ENCODE measurements at regions of chr21 and their contacts with region 1.

Region 1: DNA sequence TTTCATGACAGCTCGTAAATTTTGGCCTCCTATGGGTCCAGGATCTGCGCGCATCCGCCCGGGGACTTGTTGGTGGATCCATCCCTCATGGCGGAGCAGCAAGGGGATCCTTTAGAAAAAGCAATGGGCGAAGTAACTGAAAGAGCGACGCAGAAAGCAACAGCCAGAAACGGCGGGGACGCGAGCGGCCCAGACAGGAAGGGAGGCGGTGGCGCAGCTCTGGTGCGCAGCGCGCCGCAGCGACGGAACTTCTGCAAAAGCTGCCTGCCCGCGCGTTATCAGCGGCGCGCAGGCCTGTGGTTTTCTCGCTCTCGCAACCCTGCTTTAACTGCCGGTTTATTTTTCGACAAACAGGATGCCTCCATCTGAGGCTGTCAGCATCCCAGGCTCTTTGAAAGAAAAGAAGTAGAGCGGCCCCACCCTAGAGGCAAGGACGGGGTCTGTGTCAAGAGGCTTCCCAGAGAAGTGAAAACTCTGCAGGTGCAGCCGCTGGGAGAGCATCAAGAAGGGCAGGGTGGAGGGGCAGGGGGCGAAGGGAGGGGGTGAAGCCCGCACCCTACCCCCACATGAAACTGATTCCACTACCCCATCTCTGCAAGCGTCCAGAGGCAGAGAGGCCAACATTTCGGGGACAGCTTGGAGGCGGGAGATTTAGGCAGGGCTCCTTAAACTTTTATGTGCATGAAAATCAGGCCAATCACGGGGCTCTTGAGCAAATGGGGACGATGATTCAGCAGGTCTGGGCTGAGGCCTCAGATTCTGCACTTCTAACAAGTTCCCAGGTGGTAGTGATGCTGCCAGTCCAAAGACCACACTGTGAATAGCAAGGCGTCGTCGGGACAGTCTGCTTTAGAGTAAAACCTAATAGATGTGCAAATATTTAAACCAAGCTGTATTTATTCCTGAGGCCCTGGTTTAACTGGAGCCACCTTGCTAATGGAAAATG is 22.2 kb downstream of the RUNX1 start:
- DNase-seq: peak; percentile 79 to 89 (median 86)
- H3K4me3 ChIP-seq: peak overlapping the region; percentile 34 to 68 (median 45)
- H3K4me3 Mint-ChIP-seq: peak overlapping the region; percentile 82 to 97
- H3K27ac ChIP-seq: peak overlapping the region; percentile 81 to 93
- H3K27ac Mint-ChIP-seq: peak overlapping the region; percentile 97 to 99 (median 98)
- H3K4me1 ChIP-seq: peaks cover 47 to 53% of the 10 kb centered on the region in 2 donors
- H3K4me1 Mint-ChIP-seq: peaks cover 62% of the 10 kb centered on the region
- H3K27me3 ChIP-seq: no peaks in the 10 kb centered on the region
- H3K27me3 Mint-ChIP-seq: peaks cover 0 to 2% (median 0%) of the 10 kb centered on the region in 3 donors
- CTCF ChIP-seq: no peak

Region 2: DNA sequence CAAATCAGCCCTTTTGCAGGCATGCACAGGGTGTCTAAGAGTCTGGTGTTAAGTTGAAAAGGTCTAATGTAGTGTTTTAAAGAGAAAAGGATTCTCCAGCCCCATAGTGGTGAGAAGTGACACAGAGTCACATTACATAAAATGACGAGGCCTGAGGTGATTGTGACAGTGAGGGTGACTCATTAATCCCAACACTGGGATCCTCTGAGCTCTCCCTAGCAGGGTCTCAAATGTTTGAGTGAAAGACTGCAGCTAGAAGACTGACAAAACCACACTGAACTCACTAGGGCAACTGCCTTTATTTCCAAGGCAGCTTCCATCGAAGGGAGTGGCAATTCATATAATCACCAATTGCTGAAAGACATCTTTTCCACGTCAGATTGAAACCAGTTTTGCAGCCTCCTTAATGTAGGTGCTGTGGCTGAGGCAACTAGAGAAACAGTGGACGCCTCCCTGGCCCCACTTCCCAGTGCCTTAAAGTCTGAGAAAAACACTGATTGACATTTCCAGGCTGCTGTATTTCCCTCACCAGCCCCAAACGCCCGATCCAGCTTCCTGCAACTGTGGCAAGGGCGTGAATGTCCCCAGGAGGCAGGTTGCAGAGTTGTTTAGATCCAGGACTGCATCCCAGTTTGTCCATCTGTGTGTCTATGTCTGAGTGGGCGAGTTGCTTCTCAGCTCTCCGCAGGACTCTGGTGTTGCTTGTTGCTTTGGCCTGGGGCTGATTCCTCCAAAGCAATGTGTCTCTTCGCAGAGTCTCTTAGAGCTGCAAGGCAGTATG is 59.2 kb before region 1 on chr21:
- intact Hi-C with region 1: loop called in 1 of 2 experiments (anchors 5 kb)
- DNase-seq: peak; percentile 71 to 89 (median 87)
- H3K4me3 ChIP-seq: peak overlapping the region in 1 of 3 experiments; percentile 16
- H3K4me3 Mint-ChIP-seq: peak overlapping the region in 1 of 2 donors; percentile 21
- H3K27ac ChIP-seq: peak overlapping the region; percentile 42 to 70
- H3K27ac Mint-ChIP-seq: peak overlapping the region; percentile 81 to 97 (median 93)
- H3K4me1 ChIP-seq: peaks cover 66 to 67% of the 10 kb centered on the region in 2 donors
- H3K4me1 Mint-ChIP-seq: peaks cover 85% of the 10 kb centered on the region
- H3K27me3 ChIP-seq: no peaks in the 10 kb centered on the region
- H3K27me3 Mint-ChIP-seq: no peaks in the 10 kb centered on the region
- CTCF ChIP-seq: no peak

Region 3: DNA sequence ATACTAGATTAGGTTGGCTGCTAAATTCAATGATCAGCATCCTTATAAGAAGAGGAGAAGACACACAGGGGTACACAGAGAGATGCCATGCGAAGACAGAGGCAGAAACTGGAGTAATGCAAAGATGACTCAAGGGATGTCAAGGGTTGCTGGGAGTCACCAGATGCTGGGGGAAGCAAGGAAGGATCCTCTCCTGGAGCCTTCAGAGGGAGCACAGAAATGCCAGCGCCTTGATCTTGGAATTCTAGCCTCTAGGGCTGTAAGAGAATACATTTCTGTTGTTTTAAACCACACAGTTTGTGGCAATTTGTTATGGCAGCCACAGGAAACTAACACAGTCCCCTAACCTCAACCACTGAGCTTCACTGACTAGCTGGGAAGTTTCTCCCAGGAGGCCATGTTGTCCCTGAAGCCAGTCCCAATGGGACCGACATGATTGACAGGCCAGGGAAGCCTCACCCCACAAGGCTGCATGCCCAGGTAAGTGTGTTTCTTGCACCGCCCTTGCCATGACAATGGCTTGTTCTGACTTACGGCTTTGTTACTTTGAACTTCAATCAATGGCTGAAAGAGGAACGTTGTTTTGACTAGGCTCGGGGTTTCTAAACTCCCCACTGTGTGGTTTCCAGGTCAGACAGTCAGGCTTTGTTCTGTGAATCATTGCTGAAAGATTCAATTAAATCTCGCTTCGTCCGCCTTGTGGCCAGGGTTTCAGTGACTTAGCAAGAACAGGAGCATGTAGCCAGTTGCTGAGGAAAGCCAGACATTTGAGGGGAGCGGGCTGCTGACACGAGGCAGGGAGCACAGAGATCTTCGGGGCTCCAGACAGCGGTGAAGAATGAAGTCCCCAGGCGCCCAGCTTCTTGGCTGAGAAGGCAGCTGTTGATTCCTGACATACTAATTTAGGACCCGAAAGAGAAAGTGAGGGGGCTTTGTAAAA is 40.1 kb before region 1 on chr21:
- intact Hi-C with region 1: loop called in 1 of 2 experiments (anchors 5 kb)
- DNase-seq: peak in 2 of 3 donors; percentile 41 to 51
- H3K4me3 ChIP-seq: no peak overlapping the region
- H3K4me3 Mint-ChIP-seq: no peak overlapping the region
- H3K27ac ChIP-seq: peak overlapping the region in 1 of 2 donors; percentile 2
- H3K27ac Mint-ChIP-seq: peak overlapping the region in 6 of 7 donors; percentile 10 to 76 (median 34)
- H3K4me1 ChIP-seq: peaks cover 27 to 41% of the 10 kb centered on the region in 2 donors
- H3K4me1 Mint-ChIP-seq: peaks cover 77% of the 10 kb centered on the region
- H3K27me3 ChIP-seq: no peaks in the 10 kb centered on the region
- H3K27me3 Mint-ChIP-seq: peaks cover 0 to 3% (median 0%) of the 10 kb centered on the region in 3 donors
- CTCF ChIP-seq: no peak

Region 4: DNA sequence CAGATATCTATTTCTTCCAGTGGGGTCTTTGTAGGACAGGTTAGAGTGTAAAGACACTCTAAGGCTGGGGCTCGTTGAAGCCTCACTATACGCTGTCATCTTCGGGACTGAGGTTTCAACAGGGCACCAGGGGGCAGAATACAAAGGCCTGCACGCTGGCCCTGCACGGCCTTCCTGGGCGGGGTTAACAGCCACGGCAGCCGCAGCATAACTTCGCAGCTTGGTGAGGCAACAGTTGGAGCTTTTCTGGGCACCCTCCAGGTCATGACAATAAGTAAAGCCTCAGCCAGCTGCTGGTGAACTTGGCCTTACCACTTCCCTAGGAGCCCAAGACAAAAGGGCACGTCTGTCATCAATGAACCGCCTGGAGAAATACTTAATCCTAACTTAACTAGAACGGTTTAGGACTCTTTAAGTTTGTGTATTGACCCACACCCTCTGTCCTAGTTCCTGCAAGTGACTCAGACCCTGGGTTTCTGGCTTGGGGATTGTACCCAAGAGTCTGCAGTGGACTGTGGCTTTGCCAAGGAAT is 24.5 kb after region 1 on chr21:
- intact Hi-C with region 1: loop called in 1 of 2 experiments (anchors 1 kb)
- DNase-seq: peak; percentile 92 to 94 (median 93)
- H3K4me3 ChIP-seq: peak overlapping the region in 1 of 3 experiments; percentile 93
- H3K4me3 Mint-ChIP-seq: peak overlapping the region; percentile 28 to 48
- H3K27ac ChIP-seq: peak overlapping the region; percentile 65 to 99
- H3K27ac Mint-ChIP-seq: peak overlapping the region; percentile 99 to 100 (median 100)
- H3K4me1 ChIP-seq: peaks cover 43 to 48% of the 10 kb centered on the region in 2 donors
- H3K4me1 Mint-ChIP-seq: peaks cover 40% of the 10 kb centered on the region
- H3K27me3 ChIP-seq: no peaks in the 10 kb centered on the region
- H3K27me3 Mint-ChIP-seq: peaks cover 0 to 6% (median 3%) of the 10 kb centered on the region in 3 donors
- CTCF ChIP-seq: peak; percentile 74

Region 5: DNA sequence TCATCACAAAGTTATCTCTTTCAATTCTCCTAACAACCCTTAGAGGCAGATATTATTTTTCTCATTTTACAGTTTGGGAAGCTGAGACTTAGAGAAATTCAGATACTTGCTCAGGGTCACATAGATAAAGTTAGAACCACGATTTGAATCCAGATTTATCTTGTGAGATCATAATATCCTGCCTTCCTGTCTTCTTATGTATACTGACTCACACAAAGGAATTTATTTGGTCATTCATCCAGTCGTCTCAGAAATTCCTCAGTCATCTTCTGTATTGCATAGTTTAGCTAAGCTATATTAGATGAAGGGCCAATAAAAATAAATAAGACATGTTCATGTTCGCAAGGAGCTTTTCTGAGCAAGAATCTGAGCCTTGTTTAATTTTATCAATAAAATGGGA is 58.0 kb after region 1 on chr21:
- intact Hi-C with region 1: no loop called
- DNase-seq: no peak
- H3K4me3 ChIP-seq: no peak overlapping the region
- H3K4me3 Mint-ChIP-seq: no peak overlapping the region
- H3K27ac ChIP-seq: no peak overlapping the region
- H3K27ac Mint-ChIP-seq: no peak overlapping the region
- H3K4me1 ChIP-seq: no peaks in the 10 kb centered on the region
- H3K4me1 Mint-ChIP-seq: peaks cover 2% of the 10 kb centered on the region
- H3K27me3 ChIP-seq: no peaks in the 10 kb centered on the region
- H3K27me3 Mint-ChIP-seq: peaks cover 0 to 2% (median 0%) of the 10 kb centered on the region in 3 donors
- CTCF ChIP-seq: no peak

Region 6: DNA sequence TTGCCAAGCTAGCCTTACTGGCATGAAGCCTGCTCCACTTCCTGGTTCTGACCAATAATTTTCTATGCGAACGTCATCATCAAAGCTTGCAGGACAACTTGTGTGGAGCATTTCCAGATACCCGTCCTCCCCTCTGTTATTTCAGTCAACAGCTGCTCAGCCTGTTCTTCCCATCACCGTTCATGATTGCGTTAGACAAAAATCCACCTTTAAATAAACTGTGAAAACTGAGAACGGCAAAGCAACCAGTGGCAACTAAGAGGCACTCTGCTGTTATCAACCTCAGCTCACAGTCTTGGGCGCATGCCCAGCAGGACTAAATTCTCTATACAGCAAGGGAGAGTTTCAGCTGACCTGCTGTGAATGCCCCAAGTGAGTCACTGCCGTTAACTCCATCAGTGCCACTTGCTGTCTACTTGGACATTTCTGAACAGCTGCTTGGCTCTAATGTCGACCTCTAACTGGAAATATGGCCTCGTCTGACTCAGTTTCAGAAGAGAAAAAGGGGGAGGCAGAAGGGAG is 229.6 kb after region 1 on chr21:
- intact Hi-C with region 1: no loop called
- DNase-seq: no peak
- H3K4me3 ChIP-seq: no peak overlapping the region
- H3K4me3 Mint-ChIP-seq: no peak overlapping the region
- H3K27ac ChIP-seq: no peak overlapping the region
- H3K27ac Mint-ChIP-seq: no peak overlapping the region
- H3K4me1 ChIP-seq: no peaks in the 10 kb centered on the region
- H3K4me1 Mint-ChIP-seq: no peaks in the 10 kb centered on the region
- H3K27me3 ChIP-seq: no peaks in the 10 kb centered on the region
- H3K27me3 Mint-ChIP-seq: peaks cover 2 to 6% (median 3%) of the 10 kb centered on the region in 3 donors
- CTCF ChIP-seq: no peak

Region 7: GRCh38 chr21:35711661-35712060 is 684.8 kb after region 1 on chr21:
- intact Hi-C with region 1: no loop called
- DNase-seq: no peak
- H3K4me3 ChIP-seq: no peak overlapping the region
- H3K4me3 Mint-ChIP-seq: no peak overlapping the region
- H3K27ac ChIP-seq: no peak overlapping the region
- H3K27ac Mint-ChIP-seq: no peak overlapping the region
- H3K4me1 ChIP-seq: no peaks in the 10 kb centered on the region
- H3K4me1 Mint-ChIP-seq: no peaks in the 10 kb centered on the region
- H3K27me3 ChIP-seq: peaks cover 0 to 2% of the 10 kb centered on the region in 2 donors
- H3K27me3 Mint-ChIP-seq: peaks cover 2 to 6% (median 3%) of the 10 kb centered on the region in 3 donors
- CTCF ChIP-seq: no peak

Measured in CD14-positive monocyte (primary cell).